Caco-2 (cell line): ENCODE measurements at regions of chr4 and their contacts with region 1.

Region 1: DNA sequence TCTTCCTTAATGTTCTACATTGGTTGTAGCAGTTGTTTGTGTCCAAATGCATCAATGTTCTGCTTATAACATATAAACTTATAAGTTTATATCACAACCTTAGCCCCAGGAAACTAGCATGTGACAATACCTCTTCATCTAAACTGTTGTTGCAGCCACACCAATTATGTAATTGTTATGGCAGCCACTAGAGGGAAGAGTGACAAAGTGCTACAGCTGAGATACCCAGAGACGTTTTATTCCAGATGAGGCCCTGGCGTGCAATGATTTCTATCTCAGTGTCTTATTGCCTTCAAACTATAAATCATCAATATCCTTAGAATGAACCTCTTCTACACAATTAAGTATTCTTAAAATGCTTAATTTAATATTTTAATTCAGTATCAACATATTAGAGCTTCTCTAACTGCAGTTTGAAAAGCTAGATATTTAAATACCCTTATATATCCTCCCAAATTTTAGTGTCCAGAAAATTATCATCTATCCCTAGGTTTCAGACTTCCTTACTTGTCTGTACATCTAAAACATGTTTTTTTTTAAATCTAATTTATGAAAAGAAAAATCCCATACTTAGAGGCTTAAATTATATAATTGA is 171.6 kb downstream of the PCDH10 start:
- DNase-seq: peak in 1 of 2 experiments; percentile 36
- H3K4me3 ChIP-seq: no peak overlapping the region
- H3K4me3 Mint-ChIP-seq: no peak overlapping the region
- H3K27ac Mint-ChIP-seq: no peak overlapping the region
- H3K4me1 ChIP-seq: no peaks in the 10 kb centered on the region
- H3K4me1 Mint-ChIP-seq: no peaks in the 10 kb centered on the region
- H3K27me3 ChIP-seq: no peaks in the 10 kb centered on the region
- H3K27me3 Mint-ChIP-seq: peaks cover under 1% of the 10 kb centered on the region
- CTCF ChIP-seq: peak; percentile 46 to 53

Region 2: DNA sequence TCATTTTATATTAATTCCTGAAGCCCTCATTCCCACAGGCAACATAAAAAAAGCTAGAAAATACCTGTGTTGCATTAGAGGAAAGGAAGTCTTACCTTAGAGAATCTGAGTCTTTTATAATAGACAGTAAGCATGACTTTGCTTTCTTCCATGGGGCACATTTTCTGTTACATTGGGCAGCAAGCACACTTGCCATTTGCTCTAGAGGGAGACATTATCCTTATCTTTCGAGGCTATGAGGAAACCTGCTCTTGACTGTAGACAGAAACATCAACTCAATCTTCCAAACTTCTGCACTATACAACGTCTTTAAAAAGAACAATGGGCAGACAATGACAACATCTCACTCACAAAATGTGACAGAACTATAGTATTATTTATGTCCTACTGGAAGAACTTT is 83.0 kb before region 1 on chr4:
- CTCF ChIA-PET with region 1: no interaction called
- POLR2A ChIA-PET with region 1: no interaction called
- intact Hi-C with region 1: loop called (anchors 5 kb)
- DNase-seq: no peak
- H3K4me3 ChIP-seq: no peak overlapping the region
- H3K4me3 Mint-ChIP-seq: no peak overlapping the region
- H3K27ac Mint-ChIP-seq: no peak overlapping the region
- H3K4me1 ChIP-seq: no peaks in the 10 kb centered on the region
- H3K4me1 Mint-ChIP-seq: no peaks in the 10 kb centered on the region
- H3K27me3 ChIP-seq: no peaks in the 10 kb centered on the region
- H3K27me3 Mint-ChIP-seq: no peaks in the 10 kb centered on the region
- CTCF ChIP-seq: no peak